K562 (cell line): ENCODE measurements at regions of chr1 and their contacts with region 1.

Region 1: GRCh38 chr1:71049951-71050598 is 2.5 kb upstream of the PTGER3 start:
- DNase-seq: peak; percentile 43 to 82 (median 58)
- ATAC-seq: no peak
- H3K4me3 ChIP-seq: no peak overlapping the region
- H3K27ac ChIP-seq: no peak overlapping the region
- H3K4me1 ChIP-seq: peaks cover 4 to 23% of the 10 kb centered on the region in 2 experiments; a peak in 4 of 5 replicates
- H3K27me3 ChIP-seq: no peaks in the 10 kb centered on the region; a peak in 1 of 5 replicates
- CTCF ChIP-seq: peak; percentile 59 to 89 (median 70); a peak in 5 of 6 replicates
- EP300 ChIP-seq: no peak
- POLR2A ChIP-seq: no peak
- RAD21 ChIP-seq: peak; percentile 95 to 97

Region 2: DNA sequence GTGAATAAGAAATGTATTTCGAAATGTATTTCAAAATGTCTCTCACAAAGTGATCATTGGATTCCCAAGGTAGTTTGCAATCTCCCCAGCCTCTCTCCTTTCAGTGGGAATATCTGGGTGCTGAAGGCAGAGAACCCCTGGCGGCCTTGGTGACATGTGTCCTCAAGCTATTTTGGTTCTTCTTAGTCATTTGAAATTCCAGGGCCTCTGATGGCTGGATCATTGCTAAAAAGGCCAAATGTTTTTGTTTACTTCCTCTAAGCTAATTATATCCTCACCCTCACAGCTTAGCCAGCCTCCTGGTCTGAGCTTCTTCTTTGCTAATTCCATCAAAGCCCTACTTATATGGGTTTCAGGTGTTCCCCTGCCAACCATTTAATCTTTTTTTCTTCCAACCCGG is 915.9 kb before region 1 on chr1:
- CTCF ChIA-PET with region 1: no interaction called
- POLR2A ChIA-PET with region 1: no interaction called
- in situ Hi-C with region 1: no loop called
- intact Hi-C with region 1: loop called (anchors 5 kb)
- DNase-seq: no peak
- ATAC-seq: no peak
- H3K4me3 ChIP-seq: no peak overlapping the region
- H3K27ac ChIP-seq: no peak overlapping the region
- H3K4me1 ChIP-seq: no peaks in the 10 kb centered on the region
- H3K27me3 ChIP-seq: no peaks in the 10 kb centered on the region
- CTCF ChIP-seq: no peak
- EP300 ChIP-seq: no peak
- POLR2A ChIP-seq: no peak
- RAD21 ChIP-seq: no peak

Region 3: GRCh38 chr1:70685300-70686241 is 364.5 kb before region 1 on chr1:
- CTCF ChIA-PET with region 1: interaction called, 3 read pairs
- POLR2A ChIA-PET with region 1: no interaction called
- in situ Hi-C with region 1: loop called (anchors 5 kb)
- intact Hi-C with region 1: loop called (anchors 1 kb)
- DNase-seq: peak; percentile 60 to 83 (median 68)
- ATAC-seq: peak; percentile 96
- H3K4me3 ChIP-seq: no peak overlapping the region
- H3K27ac ChIP-seq: no peak overlapping the region
- H3K4me1 ChIP-seq: peaks cover 3 to 5% of the 10 kb centered on the region in 2 experiments; a peak in 2 of 5 replicates
- H3K27me3 ChIP-seq: no peaks in the 10 kb centered on the region
- CTCF ChIP-seq: peak; percentile 84 to 90 (median 88)
- EP300 ChIP-seq: no peak
- POLR2A ChIP-seq: no peak
- RAD21 ChIP-seq: peak; percentile 81 to 92

Region 4: GRCh38 chr1:70874111-70874510 is 176.0 kb before region 1 on chr1:
- CTCF ChIA-PET with region 1: no interaction called
- POLR2A ChIA-PET with region 1: no interaction called
- in situ Hi-C with region 1: no loop called
- intact Hi-C with region 1: loop called (anchors 5 kb)
- DNase-seq: no peak
- ATAC-seq: peak; percentile 74
- H3K4me3 ChIP-seq: no peak overlapping the region
- H3K27ac ChIP-seq: no peak overlapping the region
- H3K4me1 ChIP-seq: peaks cover 0 to 12% of the 10 kb centered on the region in 2 experiments; a peak in 2 of 5 replicates
- H3K27me3 ChIP-seq: no peaks in the 10 kb centered on the region
- CTCF ChIP-seq: no peak
- EP300 ChIP-seq: no peak
- POLR2A ChIP-seq: no peak
- RAD21 ChIP-seq: no peak

Region 5: DNA sequence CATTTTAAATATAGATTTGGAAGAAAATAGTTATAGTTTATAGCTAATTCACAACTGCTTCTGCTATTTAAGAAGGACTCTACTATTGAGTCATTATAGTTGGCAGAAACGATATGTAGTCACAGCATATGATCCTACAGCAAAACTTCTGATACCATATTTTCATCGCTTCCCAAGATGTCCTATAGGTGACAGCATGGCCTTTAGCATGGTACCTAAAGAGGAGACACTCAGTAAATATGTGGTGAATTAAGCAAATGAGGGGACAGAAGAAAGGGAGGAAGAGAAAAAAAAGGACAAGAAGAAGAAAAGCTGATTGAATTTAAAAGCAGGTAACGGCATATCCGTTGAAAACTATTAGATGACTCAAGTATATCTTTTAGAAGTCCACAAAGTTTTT is 79.7 kb before region 1 on chr1:
- CTCF ChIA-PET with region 1: interaction called, 5 read pairs
- POLR2A ChIA-PET with region 1: no interaction called
- in situ Hi-C with region 1: no loop called
- intact Hi-C with region 1: loop called (anchors 1 kb)
- DNase-seq: peak in 1 of 4 experiments; percentile 13
- ATAC-seq: peak; percentile 67; the same call in 2 of the 3 replicates
- H3K4me3 ChIP-seq: no peak overlapping the region
- H3K27ac ChIP-seq: no peak overlapping the region
- H3K4me1 ChIP-seq: no peaks in the 10 kb centered on the region
- H3K27me3 ChIP-seq: no peaks in the 10 kb centered on the region
- CTCF ChIP-seq: peak in 1 of 3 experiments; percentile 54; a peak in 2 of 6 replicates
- EP300 ChIP-seq: no peak
- POLR2A ChIP-seq: no peak
- RAD21 ChIP-seq: peak; percentile 54 to 74

Region 6: GRCh38 chr1:71089536-71090270 is 39.6 kb after region 1 on chr1:
- CTCF ChIA-PET with region 1: no interaction called
- POLR2A ChIA-PET with region 1: no interaction called
- in situ Hi-C with region 1: no loop called
- intact Hi-C with region 1: no loop called
- DNase-seq: no peak
- ATAC-seq: no peak
- H3K4me3 ChIP-seq: no peak overlapping the region
- H3K27ac ChIP-seq: no peak overlapping the region
- H3K4me1 ChIP-seq: no peaks in the 10 kb centered on the region
- H3K27me3 ChIP-seq: no peaks in the 10 kb centered on the region; a peak in 1 of 5 replicates
- CTCF ChIP-seq: no peak
- EP300 ChIP-seq: no peak
- POLR2A ChIP-seq: no peak
- RAD21 ChIP-seq: no peak

Region 7: GRCh38 chr1:71116729-71117128 is 66.7 kb after region 1 on chr1:
- CTCF ChIA-PET with region 1: no interaction called
- POLR2A ChIA-PET with region 1: no interaction called
- in situ Hi-C with region 1: no loop called
- intact Hi-C with region 1: no loop called
- DNase-seq: no peak
- ATAC-seq: no peak
- H3K4me3 ChIP-seq: no peak overlapping the region
- H3K27ac ChIP-seq: no peak overlapping the region
- H3K4me1 ChIP-seq: no peaks in the 10 kb centered on the region
- H3K27me3 ChIP-seq: no peaks in the 10 kb centered on the region
- CTCF ChIP-seq: no peak
- EP300 ChIP-seq: no peak
- POLR2A ChIP-seq: no peak
- RAD21 ChIP-seq: no peak

Region 8: DNA sequence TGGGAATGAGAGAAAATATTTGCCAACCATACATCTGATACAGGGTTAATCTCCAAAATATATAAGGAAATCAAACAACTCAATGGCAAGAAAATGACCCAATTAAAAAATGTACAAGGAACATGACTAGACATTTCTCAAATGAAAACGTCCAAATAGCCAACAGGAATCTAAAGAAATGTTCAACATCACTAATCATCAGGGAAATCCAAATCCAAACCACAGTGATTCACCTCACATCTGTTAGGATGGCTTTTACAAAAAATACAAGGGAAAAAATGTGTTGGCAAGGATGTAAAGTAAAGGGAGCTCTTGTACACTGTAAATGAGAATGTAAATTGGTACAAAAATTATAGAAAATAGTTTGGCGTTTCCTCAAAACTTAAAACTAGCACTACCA is 85.5 kb after region 1 on chr1:
- CTCF ChIA-PET with region 1: no interaction called
- POLR2A ChIA-PET with region 1: no interaction called
- in situ Hi-C with region 1: no loop called
- intact Hi-C with region 1: no loop called
- DNase-seq: no peak
- ATAC-seq: no peak
- H3K4me3 ChIP-seq: no peak overlapping the region
- H3K27ac ChIP-seq: no peak overlapping the region
- H3K4me1 ChIP-seq: no peaks in the 10 kb centered on the region
- H3K27me3 ChIP-seq: no peaks in the 10 kb centered on the region
- CTCF ChIP-seq: no peak
- EP300 ChIP-seq: no peak
- POLR2A ChIP-seq: no peak
- RAD21 ChIP-seq: no peak